ENCODE measurements at regions of chr16 and their contacts with region 1.

Region 1: GRCh38 chr16:87778830-87779579 is 13.2 kb upstream of the KLHDC4 start:
- DNase-seq: peak; percentile 91
- H3K4me3 Mint-ChIP-seq: peak overlapping the region; percentile 70
- H3K27ac Mint-ChIP-seq: peak overlapping the region; percentile 91
- H3K4me1 Mint-ChIP-seq: peaks cover 51% of the 10 kb centered on the region
- H3K27me3 Mint-ChIP-seq: no peaks in the 10 kb centered on the region

Region 2: DNA sequence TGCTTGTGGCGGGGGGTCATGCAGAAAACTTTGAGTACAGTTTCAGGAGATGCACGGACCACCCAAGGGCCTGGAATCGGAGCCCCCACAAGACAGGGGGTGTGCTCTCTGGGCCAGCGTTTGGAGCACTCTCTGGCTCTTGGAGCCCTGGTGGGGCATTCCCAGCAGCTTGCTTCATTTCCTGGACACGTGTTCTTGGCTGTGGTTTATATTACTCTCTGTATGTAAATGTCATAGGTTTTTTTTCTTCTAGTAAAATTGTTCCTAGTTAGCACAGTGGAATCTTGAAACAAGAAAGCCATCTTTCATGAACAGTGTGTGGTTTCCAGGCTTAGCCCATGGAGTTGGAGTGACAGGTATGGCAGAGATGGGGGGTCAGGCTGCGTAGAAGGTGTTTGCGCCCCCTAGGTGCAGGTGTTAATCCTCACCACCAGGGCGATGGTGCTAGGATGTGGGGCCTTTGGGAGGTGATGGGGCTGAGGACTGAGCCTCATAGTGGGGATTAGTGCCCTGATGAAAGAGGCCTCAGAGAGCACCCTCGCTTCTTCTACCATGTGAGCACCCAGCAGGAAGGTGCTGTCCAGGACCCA is 96.9 kb before region 1 on chr16:
- intact Hi-C with region 1: no loop called
- DNase-seq: no peak
- H3K4me3 Mint-ChIP-seq: no peak overlapping the region
- H3K27ac Mint-ChIP-seq: peak overlapping the region; percentile 19
- H3K4me1 Mint-ChIP-seq: peaks cover 10% of the 10 kb centered on the region
- H3K27me3 Mint-ChIP-seq: peaks cover 3% of the 10 kb centered on the region

Region 3: DNA sequence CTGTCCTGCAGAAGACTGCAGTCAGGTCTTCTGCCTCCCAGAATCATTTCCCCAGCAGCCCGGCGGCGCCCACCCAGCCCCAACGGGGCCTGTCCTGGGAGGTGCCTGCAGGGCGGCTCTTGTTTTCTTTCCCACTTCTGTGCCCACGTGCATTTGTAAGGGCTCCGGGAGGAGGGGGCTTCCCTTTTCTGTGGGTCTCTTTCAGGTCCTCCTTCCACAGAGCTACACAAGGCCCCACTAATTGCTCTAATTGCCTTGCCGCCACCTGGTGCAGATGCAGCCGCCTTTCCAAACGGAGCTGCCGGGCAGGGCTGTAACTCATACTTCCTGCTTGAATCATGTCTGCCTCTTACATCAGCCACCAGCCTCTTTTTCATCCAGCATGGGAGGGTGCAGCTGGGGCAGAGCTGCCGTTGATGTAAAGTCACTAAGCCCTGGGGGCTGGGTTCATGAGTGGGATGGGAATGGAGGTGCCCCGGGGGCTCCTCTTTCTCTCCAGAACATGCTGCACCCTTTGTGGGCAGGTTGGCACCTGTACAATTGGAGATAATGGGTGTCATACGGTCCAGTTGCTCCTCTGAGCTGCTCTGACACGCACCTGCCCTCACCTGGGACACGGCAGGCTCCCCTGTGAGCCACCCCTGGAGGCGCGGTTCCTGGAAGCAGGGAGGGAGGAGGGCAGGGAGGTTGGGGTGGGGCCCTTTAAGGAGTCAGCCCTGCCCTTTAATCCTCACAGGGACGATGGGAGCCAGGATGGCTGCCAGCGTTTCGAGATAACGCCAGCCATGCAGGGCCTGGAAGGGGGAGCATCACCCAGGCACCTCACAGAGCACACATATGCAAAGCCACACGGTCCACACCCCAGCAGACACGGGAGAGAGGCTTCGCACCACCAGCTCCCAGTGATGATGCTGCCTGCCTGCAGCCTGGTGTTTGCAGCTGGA is 27.9 kb after region 1 on chr16:
- intact Hi-C with region 1: loop called (anchors 1 kb)
- DNase-seq: peak; percentile 38
- H3K4me3 Mint-ChIP-seq: peak overlapping the region; percentile 87
- H3K27ac Mint-ChIP-seq: peak overlapping the region; percentile 90
- H3K4me1 Mint-ChIP-seq: peaks cover 38% of the 10 kb centered on the region
- H3K27me3 Mint-ChIP-seq: peaks cover 1% of the 10 kb centered on the region

Region 4: GRCh38 chr16:87853411-87854052 is 74.5 kb after region 1 on chr16:
- intact Hi-C with region 1: loop called (anchors 1 kb)
- DNase-seq: peak; percentile 83
- H3K4me3 Mint-ChIP-seq: peak overlapping the region; percentile 78
- H3K27ac Mint-ChIP-seq: peak overlapping the region; percentile 86
- H3K4me1 Mint-ChIP-seq: peaks cover 55% of the 10 kb centered on the region
- H3K27me3 Mint-ChIP-seq: no peaks in the 10 kb centered on the region

Region 5: DNA sequence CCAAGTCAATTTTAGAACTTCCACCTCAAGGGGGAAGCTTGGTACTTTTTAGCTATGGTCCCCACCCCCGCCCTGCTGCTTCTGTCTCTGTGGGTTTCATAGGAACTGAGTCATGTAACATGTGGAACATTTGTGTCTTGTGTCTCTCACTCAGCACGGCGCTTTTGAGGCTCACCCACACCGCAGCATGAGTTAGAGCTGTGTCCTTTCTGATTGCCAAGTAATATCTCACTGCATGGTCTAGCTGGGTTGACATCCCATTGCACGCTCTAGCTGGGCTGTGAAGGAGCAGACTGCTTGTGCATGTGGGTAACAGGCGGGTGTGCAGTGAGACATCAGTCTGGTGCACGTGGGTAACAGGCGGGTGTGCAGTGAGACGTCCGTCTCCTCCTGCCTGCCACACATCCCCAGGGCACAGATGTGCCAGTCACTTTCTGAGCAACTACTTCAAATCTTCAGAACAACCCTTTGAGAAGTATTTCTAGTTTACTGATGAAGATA is 116.7 kb after region 1 on chr16:
- intact Hi-C with region 1: loop called (anchors 1 kb)
- DNase-seq: peak; percentile 83
- H3K4me3 Mint-ChIP-seq: peak overlapping the region; percentile 76
- H3K27ac Mint-ChIP-seq: peak overlapping the region; percentile 100
- H3K4me1 Mint-ChIP-seq: peaks cover 56% of the 10 kb centered on the region
- H3K27me3 Mint-ChIP-seq: no peaks in the 10 kb centered on the region

Region 6: GRCh38 chr16:87950765-87951549 is 172.0 kb after region 1 on chr16 and contains the start of gene BANP:
- intact Hi-C with region 1: loop called (anchors 1 kb)
- DNase-seq: peak; percentile 95
- H3K4me3 Mint-ChIP-seq: peak within 1 kb of the TSS; percentile 94
- H3K27ac Mint-ChIP-seq: peak within 1 kb of the TSS; percentile 94
- H3K4me1 Mint-ChIP-seq: peaks cover 49% of the 10 kb centered on the region
- H3K27me3 Mint-ChIP-seq: no peaks in the 10 kb centered on the region
- total RNA-seq, gene BANP: 35.4 and 35.5 TPM in 2 replicates

Region 7: DNA sequence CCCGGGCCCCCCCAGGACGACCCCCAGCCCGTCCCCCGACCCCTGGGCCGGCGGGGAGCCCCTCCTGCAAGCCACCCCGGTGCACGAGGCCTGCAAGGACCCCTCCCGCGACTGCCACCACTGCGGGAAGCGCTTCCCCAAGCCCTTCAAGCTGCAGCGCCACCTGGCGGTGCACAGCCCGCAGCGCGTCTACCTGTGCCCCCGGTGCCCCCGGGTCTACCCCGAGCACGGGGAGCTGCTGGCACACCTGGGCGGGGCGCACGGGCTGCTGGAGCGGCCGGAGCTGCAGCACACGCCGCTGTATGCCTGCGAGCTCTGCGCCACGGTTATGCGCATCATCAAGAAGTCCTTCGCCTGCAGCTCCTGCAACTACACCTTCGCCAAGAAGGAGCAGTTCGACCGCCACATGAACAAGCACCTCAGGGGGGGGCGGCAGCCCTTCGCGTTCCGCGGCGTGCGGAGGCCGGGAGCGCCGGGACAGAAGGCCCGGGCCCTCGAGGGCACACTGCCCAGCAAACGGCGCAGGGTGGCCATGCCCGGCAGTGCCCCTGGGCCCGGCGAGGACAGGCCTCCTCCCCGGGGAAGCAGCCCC is 658.5 kb after region 1 on chr16:
- intact Hi-C with region 1: loop called (anchors 5 kb)
- DNase-seq: peak; percentile 52
- H3K4me3 Mint-ChIP-seq: no peak overlapping the region
- H3K27ac Mint-ChIP-seq: no peak overlapping the region
- H3K4me1 Mint-ChIP-seq: no peaks in the 10 kb centered on the region
- H3K27me3 Mint-ChIP-seq: no peaks in the 10 kb centered on the region